Activated T-helper 2 cell treated with anti-CD3 and anti-CD28 coated beads, Interferon-gamma antibody, Interleukin-2, Interleukin-4, amounts not matched to agents 10 μg/mL and 5 μg/mL and 100 μg/mL, durations not matched to agents 14 hours and 24 hours and 36 hours (primary cell): ENCODE measurements at regions of chr6 and their contacts with region 1.

Region 1: GRCh38 chr6:125779924-125780539 is 10.7 kb upstream of the NCOA7 start:
- DNase-seq: peak; percentile 72
- H3K4me3 Mint-ChIP-seq: no peak overlapping the region
- H3K27ac Mint-ChIP-seq: no peak overlapping the region
- H3K4me1 Mint-ChIP-seq: peaks cover 14% of the 10 kb centered on the region
- H3K27me3 Mint-ChIP-seq: peaks cover 21% of the 10 kb centered on the region

Region 2: GRCh38 chr6:125802943-125803377 is 22.9 kb after region 1 on chr6:
- intact Hi-C with region 1: loop called (anchors 1 kb)
- DNase-seq: no peak
- H3K4me3 Mint-ChIP-seq: no peak overlapping the region
- H3K27ac Mint-ChIP-seq: no peak overlapping the region
- H3K4me1 Mint-ChIP-seq: peaks cover 52% of the 10 kb centered on the region
- H3K27me3 Mint-ChIP-seq: no peaks in the 10 kb centered on the region

Region 3: GRCh38 chr6:125821825-125822281 is 41.8 kb after region 1 on chr6:
- intact Hi-C with region 1: no loop called
- DNase-seq: no peak
- H3K4me3 Mint-ChIP-seq: no peak overlapping the region
- H3K27ac Mint-ChIP-seq: no peak overlapping the region
- H3K4me1 Mint-ChIP-seq: peaks cover 24% of the 10 kb centered on the region
- H3K27me3 Mint-ChIP-seq: no peaks in the 10 kb centered on the region

Region 4: GRCh38 chr6:125956506-125957390 is 176.7 kb after region 1 on chr6 and contains the start of gene HINT3:
- intact Hi-C with region 1: loop called (anchors 1 kb)
- DNase-seq: peak; percentile 96
- H3K4me3 Mint-ChIP-seq: peak within 1 kb of the TSS; percentile 52
- H3K27ac Mint-ChIP-seq: peak within 1 kb of the TSS; percentile 68
- H3K4me1 Mint-ChIP-seq: peaks cover 6% of the 10 kb centered on the region
- H3K27me3 Mint-ChIP-seq: peaks cover 1% of the 10 kb centered on the region
- total RNA-seq, gene HINT3: 7.1 and 7.9 TPM in 2 replicates

Region 5: DNA sequence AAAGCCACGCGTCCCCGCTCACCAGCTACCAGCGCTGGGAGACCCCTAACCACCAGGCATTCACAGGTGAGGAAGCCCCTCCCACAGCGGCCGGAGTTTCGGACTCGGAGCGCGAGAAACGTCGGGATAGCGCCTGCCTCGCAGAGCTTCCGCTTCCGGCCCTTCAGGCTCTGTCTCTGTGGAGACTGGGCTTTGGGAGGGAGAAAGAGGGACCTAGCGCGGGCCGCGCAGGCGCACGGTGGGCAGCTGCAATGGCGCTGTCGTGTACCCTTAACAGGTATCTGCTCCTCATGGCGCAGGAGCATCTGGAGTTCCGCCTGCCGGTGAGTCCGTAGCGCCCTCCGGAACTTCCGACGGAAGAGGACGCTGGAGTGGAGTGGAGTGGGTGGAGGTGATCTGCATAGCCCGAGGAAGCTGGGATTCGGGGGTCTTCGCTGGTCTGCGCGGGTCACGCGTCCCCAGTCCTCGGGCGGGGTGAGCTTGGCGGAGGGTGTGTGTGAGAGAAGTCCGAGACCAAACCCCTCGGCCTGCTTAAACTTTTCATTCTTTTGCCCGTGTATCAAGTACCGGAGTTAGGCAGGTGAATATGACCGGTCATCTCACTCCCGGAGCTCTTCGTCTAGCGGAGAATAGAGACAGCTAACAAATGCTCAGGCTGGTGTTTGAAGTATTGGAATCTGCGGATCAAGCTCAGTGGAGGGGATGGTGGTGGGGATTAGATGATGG is 206.4 kb after region 1 on chr6 and contains the start of gene TRMT11:
- intact Hi-C with region 1: loop called (anchors 1 kb)
- DNase-seq: peak; percentile 69
- H3K4me3 Mint-ChIP-seq: peak within 1 kb of the TSS; percentile 9
- H3K27ac Mint-ChIP-seq: no peak within 1 kb of the TSS
- H3K4me1 Mint-ChIP-seq: peaks cover 9% of the 10 kb centered on the region
- H3K27me3 Mint-ChIP-seq: no peaks in the 10 kb centered on the region
- total RNA-seq, gene TRMT11: 23.9 and 25.4 TPM in 2 replicates

Region 6: DNA sequence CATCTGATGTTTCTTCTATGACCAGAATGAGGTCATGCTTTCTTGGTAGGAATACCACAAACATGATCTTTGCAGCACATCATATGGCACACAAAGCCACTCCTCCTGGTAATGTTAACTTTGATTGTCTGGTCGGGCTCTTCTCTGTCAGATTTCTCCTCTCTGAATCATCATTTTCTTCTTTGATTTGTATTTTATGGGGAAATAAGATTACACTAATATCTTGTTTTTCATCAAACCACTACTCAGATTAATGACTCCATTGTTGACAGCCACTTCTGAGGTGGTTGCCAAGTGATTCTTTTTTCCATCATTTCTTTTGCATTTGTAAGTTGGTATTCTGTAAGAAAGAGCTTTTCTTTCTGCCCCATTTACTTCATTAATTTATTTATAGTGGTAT is 235.8 kb after region 1 on chr6:
- intact Hi-C with region 1: no loop called
- DNase-seq: no peak
- H3K4me3 Mint-ChIP-seq: no peak overlapping the region
- H3K27ac Mint-ChIP-seq: no peak overlapping the region
- H3K4me1 Mint-ChIP-seq: no peaks in the 10 kb centered on the region
- H3K27me3 Mint-ChIP-seq: no peaks in the 10 kb centered on the region

Region 7: DNA sequence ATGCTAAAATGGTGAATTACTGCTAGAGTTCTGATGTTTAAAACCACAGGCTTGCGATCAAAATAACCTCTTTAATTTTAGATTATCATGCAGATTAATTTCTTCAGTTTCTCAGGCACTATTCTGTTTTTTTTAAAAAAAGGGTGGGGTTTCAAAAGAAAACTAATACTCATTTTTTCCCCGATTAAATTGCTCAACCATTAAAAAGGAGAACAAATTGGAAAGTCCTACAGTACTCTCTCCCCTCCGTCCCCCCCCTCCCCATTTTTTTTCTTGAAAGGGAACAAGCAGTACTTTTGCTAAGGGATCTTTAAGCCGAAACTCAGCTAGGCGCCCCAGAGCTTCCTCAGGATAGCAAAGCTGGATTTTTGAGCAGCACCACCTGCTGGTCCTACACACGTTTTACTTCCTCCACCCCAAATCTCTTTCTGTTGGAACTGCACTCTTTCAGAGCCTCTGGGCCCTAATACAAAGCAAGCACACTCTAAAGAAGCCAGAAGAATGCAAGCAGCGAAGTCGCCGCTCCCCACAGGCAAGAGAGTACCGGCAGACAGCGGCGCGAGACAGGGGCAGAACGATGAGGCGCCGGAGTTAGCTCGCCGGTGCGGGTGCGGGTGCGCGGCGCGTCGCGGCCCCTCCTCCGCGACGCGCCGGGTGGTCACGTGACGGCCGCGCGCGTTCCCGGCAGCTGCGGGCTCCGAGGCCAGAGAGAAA is 1486.3 kb after region 1 on chr6 and contains the start of gene RNF146:
- intact Hi-C with region 1: loop called (anchors 5 kb)
- DNase-seq: peak; percentile 69
- H3K4me3 Mint-ChIP-seq: peak within 1 kb of the TSS; percentile 97
- H3K27ac Mint-ChIP-seq: peak within 1 kb of the TSS; percentile 99
- H3K4me1 Mint-ChIP-seq: peaks cover 28% of the 10 kb centered on the region
- H3K27me3 Mint-ChIP-seq: peaks cover 16% of the 10 kb centered on the region
- total RNA-seq, gene RNF146: 18.7 and 19.1 TPM in 2 replicates